Posterior vena cava (tissue), 2 donors: ENCODE measurements at regions of chr5 and their contacts with region 1.

Region 1: DNA sequence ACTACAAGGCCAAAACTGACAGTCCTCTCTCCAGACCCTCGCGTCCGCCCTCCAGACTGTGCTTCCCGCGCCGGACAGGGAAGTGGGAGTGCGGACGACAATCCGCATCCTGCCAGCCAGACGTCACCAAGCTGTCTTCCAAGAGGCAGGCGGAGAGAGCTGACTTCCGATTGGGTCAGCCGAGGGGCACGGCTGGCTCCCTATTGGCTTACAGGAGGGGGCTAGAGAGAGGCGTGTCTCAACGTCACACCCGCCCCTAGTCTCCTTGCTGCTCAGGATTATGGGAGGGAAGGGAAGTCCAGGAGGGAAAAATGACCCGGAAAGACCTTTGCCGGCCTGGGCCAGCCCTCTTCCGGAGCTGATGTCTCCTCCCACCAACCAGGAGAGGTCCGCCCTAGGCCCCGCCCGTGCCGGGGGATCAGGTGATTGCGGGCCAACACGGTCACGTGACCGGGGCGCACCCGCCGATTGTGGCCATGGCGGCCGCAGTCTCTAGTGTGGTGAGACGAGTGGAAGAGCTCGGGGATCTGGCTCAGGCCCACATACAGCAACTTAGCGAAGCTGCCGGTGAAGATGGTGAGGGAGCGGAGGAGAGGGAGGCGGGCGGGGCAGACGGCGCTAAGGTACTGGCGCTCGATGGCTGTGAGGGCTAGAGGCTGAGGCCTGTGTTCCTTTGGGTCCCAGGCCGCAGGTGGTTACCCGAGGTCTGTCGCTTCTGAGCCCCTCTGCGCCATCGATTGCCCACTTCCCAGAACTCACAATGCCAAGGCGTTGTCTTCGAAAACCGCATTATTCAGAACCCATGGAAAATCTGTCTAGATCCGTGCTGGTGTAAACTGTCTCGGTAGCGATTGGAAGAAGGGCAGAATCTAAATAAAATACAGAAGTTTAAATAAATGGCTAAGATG is at the start of gene RIMOC1:
- DNase-seq: peak; percentile 99
- total RNA-seq, gene RIMOC1: 31.1 to 33.7 TPM

Region 2: DNA sequence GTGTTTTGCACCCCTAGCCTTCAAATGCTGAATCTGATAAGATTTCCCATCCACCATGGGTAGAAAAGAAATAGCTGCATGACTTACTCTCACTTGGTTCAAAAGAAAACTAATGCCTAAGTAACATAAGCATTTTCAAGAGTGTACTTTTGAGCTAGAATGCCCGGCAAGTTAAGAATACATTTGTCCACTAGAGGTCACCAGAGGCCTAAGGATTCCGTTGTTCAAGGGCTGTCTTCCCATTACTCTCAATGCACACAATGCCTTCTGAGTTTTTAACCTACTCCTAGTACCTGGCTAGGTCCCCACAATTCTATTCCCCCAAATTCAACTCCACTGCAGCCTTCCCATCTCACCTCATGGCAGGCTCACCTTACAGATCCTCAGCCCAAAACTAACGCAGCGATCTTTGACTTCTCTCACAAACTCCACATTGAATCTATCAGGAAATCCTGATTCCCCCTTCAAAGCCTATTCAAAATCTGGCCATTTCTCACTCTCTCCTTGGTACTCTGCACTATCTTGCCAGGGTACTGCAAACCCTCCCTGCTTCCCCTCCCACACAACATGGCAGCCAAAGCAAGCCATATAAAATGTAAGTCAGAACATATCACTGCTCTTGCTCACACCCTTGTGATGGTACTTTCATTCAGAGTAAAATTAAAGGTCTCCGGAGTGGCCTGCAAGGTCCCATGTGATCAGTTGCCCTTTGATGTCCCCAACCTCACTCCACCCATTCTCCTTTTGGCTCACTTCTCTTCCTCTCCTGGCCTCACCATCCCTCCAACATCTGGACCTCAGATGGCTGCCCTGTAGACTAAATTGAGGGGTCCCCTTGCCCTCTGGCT is 47.3 kb before region 1 on chr5:
- intact Hi-C with region 1: loop called in 1 of 2 experiments (anchors 10 kb)
- DNase-seq: no peak